ENCODE measurements at regions of chr3 and their contacts with region 1.

Region 1: DNA sequence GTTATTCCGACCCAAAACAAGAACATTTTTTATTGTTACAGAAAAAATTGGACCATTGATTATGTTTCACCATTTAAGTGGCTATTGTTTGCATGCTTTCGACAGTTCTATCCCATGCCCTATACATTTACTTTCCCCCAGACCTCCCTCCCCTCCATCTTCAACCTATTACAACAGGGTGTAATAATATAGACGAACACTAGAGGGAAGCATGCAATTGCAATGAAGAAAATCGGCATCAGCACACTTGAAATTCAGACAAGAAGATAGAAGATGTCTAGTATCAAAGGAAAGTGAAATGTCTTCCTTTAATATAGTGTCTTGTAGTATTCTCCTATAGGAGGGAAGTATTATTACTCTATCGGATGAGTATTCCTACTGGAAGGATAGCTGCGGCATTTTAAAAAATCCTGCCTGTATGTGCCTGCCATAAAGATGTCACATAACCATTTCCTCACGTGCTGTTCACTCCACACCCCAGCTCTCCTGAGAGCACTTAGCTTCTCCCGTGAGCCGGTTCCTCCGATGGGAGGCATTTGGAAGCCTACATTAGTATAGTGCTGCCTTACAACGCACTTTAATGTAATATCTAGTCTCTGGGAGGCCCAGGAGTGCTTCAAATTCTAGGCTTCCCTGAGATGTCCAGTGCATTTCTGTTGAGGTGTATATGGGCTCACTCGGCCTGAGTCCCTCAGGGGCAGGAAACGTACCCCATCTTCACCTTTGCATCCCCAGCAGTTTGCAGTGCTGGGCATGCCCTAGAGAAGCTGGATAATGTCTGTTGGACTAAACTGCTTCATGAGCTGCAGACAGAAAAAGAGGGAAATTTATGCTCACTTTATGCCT is 17.8 kb upstream of the ERICH6 start:
- DNase-seq: no peak
- H3K4me3 ChIP-seq: peak overlapping the region in 1 of 2 donors; percentile 30
- H3K27ac ChIP-seq: no peak overlapping the region
- H3K4me1 ChIP-seq: no peaks in the 10 kb centered on the region
- H3K27me3 ChIP-seq: no peaks in the 10 kb centered on the region
- CTCF ChIP-seq: peak; percentile 68 to 85 (median 68)

Region 2: GRCh38 chr3:150710097-150710496 is 11.4 kb before region 1 on chr3:
- intact Hi-C with region 1: no loop called
- DNase-seq: no peak
- H3K4me3 ChIP-seq: no peak overlapping the region
- H3K27ac ChIP-seq: no peak overlapping the region
- H3K4me1 ChIP-seq: no peaks in the 10 kb centered on the region
- H3K27me3 ChIP-seq: no peaks in the 10 kb centered on the region
- CTCF ChIP-seq: no peak

Region 3: GRCh38 chr3:150763122-150763841 is 41.8 kb after region 1 on chr3 and contains the start of gene SIAH2:
- intact Hi-C with region 1: loop called (anchors 2 kb)
- DNase-seq: peak; percentile 82 to 96
- H3K4me3 ChIP-seq: peak within 1 kb of the TSS; percentile 81 to 94
- H3K27ac ChIP-seq: peak within 1 kb of the TSS; percentile 92 to 97
- H3K4me1 ChIP-seq: peaks cover 0 to 23% of the 10 kb centered on the region in 2 donors
- H3K27me3 ChIP-seq: no peaks in the 10 kb centered on the region
- CTCF ChIP-seq: no peak
- total RNA-seq, gene SIAH2: 50.9 TPM

Region 4: GRCh38 chr3:150787741-150788370 is 66.3 kb after region 1 on chr3:
- intact Hi-C with region 1: loop called (anchors 5 kb)
- DNase-seq: peak in 1 of 2 donors; percentile 86
- H3K4me3 ChIP-seq: no peak overlapping the region
- H3K27ac ChIP-seq: no peak overlapping the region
- H3K4me1 ChIP-seq: no peaks in the 10 kb centered on the region
- H3K27me3 ChIP-seq: no peaks in the 10 kb centered on the region
- CTCF ChIP-seq: peak; percentile 67 to 87 (median 80)

Region 5: DNA sequence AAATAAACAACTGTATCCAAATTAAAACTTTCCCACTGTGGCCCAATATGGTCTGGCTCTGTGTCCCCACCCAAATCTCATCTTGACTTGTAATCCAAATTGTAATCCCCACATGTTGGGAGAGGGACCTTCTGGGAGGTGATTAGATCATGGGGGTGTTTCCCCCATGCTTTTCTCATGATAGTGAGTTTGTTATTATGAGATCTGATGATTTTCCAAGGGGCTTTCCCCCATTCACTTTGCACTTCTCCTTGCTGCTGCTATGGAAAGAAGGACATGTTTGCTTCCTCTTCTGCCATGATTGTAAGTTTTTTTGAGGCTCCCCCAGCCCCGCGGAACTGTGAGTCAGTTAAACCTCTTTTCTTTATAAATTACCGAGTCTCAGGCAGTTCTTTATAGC is 128.7 kb after region 1 on chr3:
- intact Hi-C with region 1: no loop called
- DNase-seq: no peak
- H3K4me3 ChIP-seq: no peak overlapping the region
- H3K27ac ChIP-seq: no peak overlapping the region
- H3K4me1 ChIP-seq: no peaks in the 10 kb centered on the region
- H3K27me3 ChIP-seq: no peaks in the 10 kb centered on the region
- CTCF ChIP-seq: no peak

Region 6: GRCh38 chr3:150870396-150870795 is 148.9 kb after region 1 on chr3:
- intact Hi-C with region 1: loop called (anchors 1 kb)
- DNase-seq: no peak
- H3K4me3 ChIP-seq: no peak overlapping the region
- H3K27ac ChIP-seq: no peak overlapping the region
- H3K4me1 ChIP-seq: no peaks in the 10 kb centered on the region
- H3K27me3 ChIP-seq: no peaks in the 10 kb centered on the region
- CTCF ChIP-seq: no peak

Region 7: GRCh38 chr3:151086484-151087456 is 365.3 kb after region 1 on chr3:
- intact Hi-C with region 1: loop called (anchors 10 kb)
- DNase-seq: peak in 1 of 2 donors; percentile 82
- H3K4me3 ChIP-seq: peak overlapping the region; percentile 65 to 67
- H3K27ac ChIP-seq: peak overlapping the region in 1 of 2 donors; percentile 62
- H3K4me1 ChIP-seq: no peaks in the 10 kb centered on the region
- H3K27me3 ChIP-seq: no peaks in the 10 kb centered on the region
- CTCF ChIP-seq: peak; percentile 14 to 53 (median 20)

Region 8: GRCh38 chr3:151146071-151146730 is 424.7 kb after region 1 on chr3:
- intact Hi-C with region 1: loop called (anchors 1 kb)
- DNase-seq: peak in 1 of 2 donors; percentile 85
- H3K4me3 ChIP-seq: no peak overlapping the region
- H3K27ac ChIP-seq: peak overlapping the region in 1 of 2 donors; percentile 23
- H3K4me1 ChIP-seq: peaks cover 0 to 4% of the 10 kb centered on the region in 2 donors
- H3K27me3 ChIP-seq: no peaks in the 10 kb centered on the region
- CTCF ChIP-seq: peak; percentile 79 to 88 (median 82)

Measured in ascending aorta (tissue), 2 donors.